Esophagus muscularis mucosa (tissue), 4 donors: ENCODE measurements at regions of chr20 and their contacts with region 1.

Region 1: GRCh38 chr20:33460711-33461110 is 17.1 kb upstream of the SNTA1 start:
- DNase-seq: no peak
- H3K4me3 ChIP-seq: no peak overlapping the region
- H3K27ac ChIP-seq: no peak overlapping the region
- H3K4me1 ChIP-seq: peaks cover 0 to 16% (median 5%) of the 10 kb centered on the region in 4 donors
- H3K27me3 ChIP-seq: no peaks in the 10 kb centered on the region
- CTCF ChIP-seq: no peak
- EP300 ChIP-seq: no peak
- POLR2A ChIP-seq: no peak

Region 2: GRCh38 chr20:33554914-33555420 is 94.3 kb after region 1 on chr20:
- intact Hi-C with region 1: no loop called
- DNase-seq: no peak
- H3K4me3 ChIP-seq: peak overlapping the region in 3 of 4 donors; percentile 2 to 31 (median 19)
- H3K27ac ChIP-seq: peak overlapping the region; percentile 58 to 64 (median 61)
- H3K4me1 ChIP-seq: peaks cover 5 to 41% (median 34%) of the 10 kb centered on the region in 4 donors
- H3K27me3 ChIP-seq: no peaks in the 10 kb centered on the region
- CTCF ChIP-seq: no peak
- EP300 ChIP-seq: no peak
- POLR2A ChIP-seq: no peak

Region 3: GRCh38 chr20:33653218-33653899 is 192.6 kb after region 1 on chr20:
- intact Hi-C with region 1: loop called (anchors 5 kb)
- DNase-seq: no peak
- H3K4me3 ChIP-seq: peak overlapping the region; percentile 23 to 37 (median 27)
- H3K27ac ChIP-seq: no peak overlapping the region
- H3K4me1 ChIP-seq: peaks cover 17 to 27% (median 25%) of the 10 kb centered on the region in 4 donors
- H3K27me3 ChIP-seq: no peaks in the 10 kb centered on the region
- CTCF ChIP-seq: peak; percentile 76 to 85 (median 79)
- EP300 ChIP-seq: no peak
- POLR2A ChIP-seq: no peak

Region 4: DNA sequence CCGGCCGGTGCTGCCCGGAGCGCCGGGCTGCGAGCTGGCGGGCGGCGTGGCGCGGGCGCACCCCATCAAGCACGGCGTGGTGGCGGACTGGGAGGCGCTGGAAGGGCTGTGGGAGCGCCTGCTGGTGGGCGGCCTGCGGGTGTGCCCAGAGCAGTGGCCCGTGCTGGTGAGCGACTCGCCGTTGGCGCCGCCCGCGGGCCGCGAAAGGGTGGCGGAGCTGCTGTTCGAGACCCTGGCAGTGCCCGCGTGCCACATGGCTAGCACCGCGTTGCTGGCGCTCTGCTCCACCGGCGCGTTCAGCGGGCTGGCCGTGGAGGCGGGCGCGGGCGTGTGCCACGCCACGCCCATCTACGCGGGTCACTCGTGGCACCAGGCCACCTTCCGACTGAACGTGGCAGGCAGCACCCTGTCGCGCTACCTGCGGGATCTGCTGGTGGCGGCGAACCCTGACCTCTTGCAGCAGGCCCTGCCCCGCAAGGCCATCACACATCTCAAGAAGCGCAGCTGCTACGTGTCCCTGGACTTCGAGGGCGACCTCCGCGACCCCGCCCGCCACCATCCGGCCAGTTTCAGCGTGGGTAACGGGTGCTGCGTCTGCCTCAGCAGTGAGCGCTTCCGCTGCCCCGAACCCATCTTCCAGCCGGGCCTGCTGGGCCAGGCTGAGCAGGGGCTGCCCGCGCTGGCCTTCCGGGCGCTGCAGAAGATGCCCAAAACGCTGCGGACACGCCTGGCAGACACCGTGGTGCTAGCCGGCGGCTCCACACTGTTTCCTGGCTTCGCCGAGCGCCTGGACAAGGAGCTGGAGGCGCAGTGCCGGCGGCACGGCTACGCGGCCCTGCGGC is 206.8 kb after region 1 on chr20:
- intact Hi-C with region 1: loop called (anchors 1 kb)
- DNase-seq: no peak
- H3K4me3 ChIP-seq: peak overlapping the region; percentile 58 to 71 (median 70)
- H3K27ac ChIP-seq: peak overlapping the region; percentile 85 to 95 (median 92)
- H3K4me1 ChIP-seq: peaks cover 43 to 71% (median 57%) of the 10 kb centered on the region in 4 donors
- H3K27me3 ChIP-seq: no peaks in the 10 kb centered on the region
- CTCF ChIP-seq: no peak
- EP300 ChIP-seq: no peak
- POLR2A ChIP-seq: no peak